Prostate gland (tissue), 2 donors: ENCODE measurements at regions of chr17 and their contacts with region 1.

Region 1: DNA sequence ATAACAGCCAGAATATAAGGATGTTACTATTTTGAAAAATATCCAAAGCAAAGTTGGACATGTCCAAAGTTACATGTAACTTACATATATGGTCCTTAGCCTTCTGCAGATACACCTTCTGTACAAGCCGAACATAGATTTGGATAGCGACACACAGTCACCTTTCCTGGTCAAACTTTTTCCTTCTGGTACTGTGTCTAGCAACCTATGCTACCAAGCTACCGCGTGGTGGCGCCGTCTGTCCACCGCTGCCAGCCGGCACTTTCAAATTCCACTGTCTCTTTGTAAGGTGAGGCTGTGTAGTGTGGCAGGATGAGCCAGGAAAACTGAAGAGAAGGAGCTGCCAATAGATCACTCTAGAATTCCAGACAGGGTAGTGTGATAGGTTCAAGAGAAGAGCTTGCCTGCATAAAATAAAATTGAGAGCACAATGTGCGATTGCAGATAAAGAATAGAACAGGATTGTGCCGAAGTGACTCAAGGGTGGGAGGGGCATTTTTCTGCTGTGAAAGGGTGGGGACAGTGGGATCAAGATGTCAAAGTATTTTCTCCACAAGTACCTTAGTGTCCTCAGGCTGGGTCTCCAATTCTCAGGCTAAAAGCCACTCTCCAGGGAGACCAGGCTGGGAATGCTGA is 366.9 kb downstream of the SLC39A11 start:
- DNase-seq: peak; percentile 66
- H3K4me3 ChIP-seq: no peak overlapping the region
- H3K27ac ChIP-seq: no peak overlapping the region
- H3K4me1 ChIP-seq: no peaks in the 10 kb centered on the region
- H3K27me3 ChIP-seq: no peaks in the 10 kb centered on the region
- CTCF ChIP-seq: peak; percentile 51 to 91 (median 78)
- POLR2A ChIP-seq: no peak

Region 2: GRCh38 chr17:72839131-72839725 is 113.7 kb after region 1 on chr17:
- intact Hi-C with region 1: no loop called
- DNase-seq: no peak
- H3K4me3 ChIP-seq: no peak overlapping the region
- H3K27ac ChIP-seq: no peak overlapping the region
- H3K4me1 ChIP-seq: no peaks in the 10 kb centered on the region
- H3K27me3 ChIP-seq: no peaks in the 10 kb centered on the region
- CTCF ChIP-seq: no peak
- POLR2A ChIP-seq: no peak

Region 3: DNA sequence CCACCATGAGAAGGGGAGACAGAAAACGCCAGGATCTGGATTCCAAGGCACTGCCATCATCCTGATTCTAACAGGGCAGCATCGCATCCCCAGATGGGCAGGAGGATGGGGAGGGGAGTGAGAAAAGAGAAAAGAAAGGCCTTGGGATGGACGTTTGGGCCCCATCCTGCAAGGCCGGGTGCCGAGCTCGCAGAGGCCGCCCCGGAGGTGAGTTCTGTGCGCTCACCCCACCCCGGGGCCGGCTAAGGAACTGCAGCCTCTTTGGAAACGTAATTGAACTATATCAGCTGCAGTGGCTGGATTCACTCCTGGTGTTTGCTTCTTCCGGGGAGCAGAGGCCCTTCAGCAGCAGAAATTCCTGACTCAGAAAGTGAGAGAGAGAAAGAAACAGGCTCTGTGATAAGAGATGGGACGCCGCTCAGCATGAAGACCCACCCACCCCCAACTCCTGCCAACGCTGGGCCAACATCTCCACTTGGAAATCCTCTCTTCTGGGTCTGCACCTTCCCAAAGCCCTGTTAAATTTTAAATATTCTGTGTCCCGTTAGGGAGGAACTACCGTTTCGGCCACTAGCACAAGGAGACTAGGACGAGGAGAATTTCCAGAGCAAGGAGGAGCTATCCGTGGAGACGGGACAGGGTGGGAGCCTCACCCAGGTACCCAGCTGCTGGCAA is 430.8 kb after region 1 on chr17:
- intact Hi-C with region 1: loop called (anchors 5 kb)
- DNase-seq: peak; percentile 33
- H3K4me3 ChIP-seq: no peak overlapping the region
- H3K27ac ChIP-seq: no peak overlapping the region
- H3K4me1 ChIP-seq: no peaks in the 10 kb centered on the region
- H3K27me3 ChIP-seq: no peaks in the 10 kb centered on the region
- CTCF ChIP-seq: peak in 3 of 4 experiments; percentile 40 to 76 (median 73)
- POLR2A ChIP-seq: no peak

Region 4: DNA sequence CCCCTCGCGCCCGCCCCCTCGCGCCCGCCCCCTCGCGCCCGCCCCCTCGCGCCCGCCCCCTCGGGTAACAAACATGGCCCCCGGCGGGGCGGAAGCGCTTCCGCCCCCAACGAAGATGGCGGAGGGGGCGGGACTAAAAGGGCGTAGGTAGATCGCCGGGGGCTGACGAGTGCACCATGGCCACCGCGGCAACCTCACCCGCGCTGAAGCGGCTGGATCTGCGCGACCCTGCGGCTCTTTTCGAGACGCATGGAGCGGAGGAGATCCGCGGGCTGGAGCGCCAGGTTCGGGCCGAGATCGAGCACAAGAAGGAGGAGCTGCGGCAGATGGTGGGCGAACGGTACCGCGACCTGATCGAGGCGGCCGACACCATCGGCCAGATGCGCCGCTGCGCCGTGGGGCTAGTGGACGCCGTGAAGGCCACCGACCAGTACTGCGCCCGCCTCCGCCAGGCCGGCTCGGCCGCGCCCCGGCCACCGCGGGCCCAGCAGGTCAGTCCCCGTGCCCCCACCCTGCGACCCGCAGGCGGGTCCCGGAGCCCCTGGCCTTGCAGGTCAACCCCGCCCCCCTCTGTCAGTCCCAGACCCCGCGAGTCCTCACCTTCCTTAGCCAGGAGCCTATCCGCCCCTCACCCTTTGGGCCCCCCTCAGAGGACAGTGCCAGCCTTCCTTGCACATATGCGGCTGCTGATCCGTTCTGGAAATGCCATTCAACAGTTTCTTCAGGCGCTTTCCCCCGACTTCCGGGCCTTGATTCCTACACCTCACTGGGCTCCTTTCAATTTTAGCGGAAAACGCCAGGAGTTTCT is 467.5 kb after region 1 on chr17 and contains the start of gene COG1:
- intact Hi-C with region 1: loop called (anchors 2 kb)
- DNase-seq: peak; percentile 71
- H3K4me3 ChIP-seq: peak within 1 kb of the TSS; percentile 74 to 98
- H3K27ac ChIP-seq: peak within 1 kb of the TSS; percentile 84 to 87
- H3K4me1 ChIP-seq: peaks cover 12% of the 10 kb centered on the region
- H3K27me3 ChIP-seq: no peaks in the 10 kb centered on the region
- CTCF ChIP-seq: no peak
- POLR2A ChIP-seq: peak; percentile 55
- total RNA-seq, gene COG1: 34.6 to 52.5 TPM

Region 5: DNA sequence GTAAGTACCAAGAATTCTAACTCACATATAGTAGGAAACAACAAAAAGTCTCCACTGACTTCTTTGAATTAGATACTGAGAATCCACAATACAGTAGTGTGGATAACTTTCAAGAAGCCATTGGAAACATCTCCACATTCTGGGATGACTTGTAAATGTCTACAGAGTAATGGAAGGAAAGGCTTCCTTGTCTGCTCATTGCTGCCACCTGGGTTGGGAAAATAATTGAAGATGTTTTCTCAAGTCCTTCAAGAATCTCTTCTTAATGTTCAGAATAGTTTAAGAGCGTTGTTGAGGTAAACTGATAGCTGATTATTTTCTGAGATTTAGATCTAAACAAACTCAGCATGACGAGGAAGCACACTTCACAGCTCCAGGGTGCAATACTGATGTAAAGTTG is 522.2 kb after region 1 on chr17:
- intact Hi-C with region 1: loop called (anchors 5 kb)
- DNase-seq: no peak
- H3K4me3 ChIP-seq: no peak overlapping the region
- H3K27ac ChIP-seq: no peak overlapping the region
- H3K4me1 ChIP-seq: no peaks in the 10 kb centered on the region
- H3K27me3 ChIP-seq: no peaks in the 10 kb centered on the region
- CTCF ChIP-seq: peak in 2 of 4 experiments; percentile 30 to 45
- POLR2A ChIP-seq: no peak

Region 6: GRCh38 chr17:73371285-73371684 is 645.7 kb after region 1 on chr17:
- intact Hi-C with region 1: loop called (anchors 5 kb)
- DNase-seq: no peak
- H3K4me3 ChIP-seq: no peak overlapping the region
- H3K27ac ChIP-seq: no peak overlapping the region
- H3K4me1 ChIP-seq: no peaks in the 10 kb centered on the region
- H3K27me3 ChIP-seq: no peaks in the 10 kb centered on the region
- CTCF ChIP-seq: no peak
- POLR2A ChIP-seq: no peak